ENCODE measurements at regions of chr1 and their contacts with region 1.

Region 1: GRCh38 chr1:89465201-89465600 is 59.4 kb upstream of the LRRC8B start:
- DNase-seq: no peak
- H3K4me3 Mint-ChIP-seq: no peak overlapping the region
- H3K27ac Mint-ChIP-seq: no peak overlapping the region
- H3K4me1 Mint-ChIP-seq: peaks cover 36% of the 10 kb centered on the region
- H3K27me3 Mint-ChIP-seq: peaks cover 73% of the 10 kb centered on the region

Region 2: GRCh38 chr1:89454845-89455521 is 10.2 kb before region 1 on chr1:
- CTCF ChIA-PET with region 1: interaction called, 11 read pairs
- POLR2A ChIA-PET with region 1: no interaction called
- DNase-seq: peak; percentile 80
- H3K4me3 Mint-ChIP-seq: no peak overlapping the region
- H3K27ac Mint-ChIP-seq: no peak overlapping the region
- H3K4me1 Mint-ChIP-seq: peaks cover 14% of the 10 kb centered on the region
- H3K27me3 Mint-ChIP-seq: peaks cover 37% of the 10 kb centered on the region

Region 3: DNA sequence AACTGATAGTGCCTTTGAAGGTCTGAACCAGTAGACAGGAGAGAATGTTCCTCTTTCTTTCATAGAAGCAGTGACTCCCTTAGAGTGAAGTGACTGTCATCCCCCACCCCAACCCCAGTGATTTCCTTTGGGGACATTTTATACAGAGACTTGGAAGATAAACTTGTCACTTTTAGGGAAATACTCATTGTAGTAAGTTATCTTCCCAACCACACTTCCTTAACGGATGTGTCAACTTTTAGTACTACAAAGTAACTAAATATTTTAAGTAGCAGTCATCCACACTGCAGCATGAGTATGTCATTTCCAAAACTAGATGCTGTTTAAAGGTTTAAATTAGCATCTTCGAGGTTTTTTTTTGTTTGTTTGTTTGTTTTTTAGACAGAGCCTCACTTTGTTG is 73.2 kb after region 1 on chr1:
- CTCF ChIA-PET with region 1: no interaction called
- POLR2A ChIA-PET with region 1: no interaction called
- DNase-seq: no peak
- H3K4me3 Mint-ChIP-seq: no peak overlapping the region
- H3K27ac Mint-ChIP-seq: peak overlapping the region; percentile 14
- H3K4me1 Mint-ChIP-seq: peaks cover 63% of the 10 kb centered on the region
- H3K27me3 Mint-ChIP-seq: no peaks in the 10 kb centered on the region

Region 4: GRCh38 chr1:89660224-89661061 is 195.2 kb after region 1 on chr1:
- CTCF ChIA-PET with region 1: no interaction called
- POLR2A ChIA-PET with region 1: no interaction called
- DNase-seq: no peak
- H3K4me3 Mint-ChIP-seq: no peak overlapping the region
- H3K27ac Mint-ChIP-seq: peak overlapping the region; percentile 82
- H3K4me1 Mint-ChIP-seq: peaks cover 86% of the 10 kb centered on the region
- H3K27me3 Mint-ChIP-seq: no peaks in the 10 kb centered on the region

Region 5: DNA sequence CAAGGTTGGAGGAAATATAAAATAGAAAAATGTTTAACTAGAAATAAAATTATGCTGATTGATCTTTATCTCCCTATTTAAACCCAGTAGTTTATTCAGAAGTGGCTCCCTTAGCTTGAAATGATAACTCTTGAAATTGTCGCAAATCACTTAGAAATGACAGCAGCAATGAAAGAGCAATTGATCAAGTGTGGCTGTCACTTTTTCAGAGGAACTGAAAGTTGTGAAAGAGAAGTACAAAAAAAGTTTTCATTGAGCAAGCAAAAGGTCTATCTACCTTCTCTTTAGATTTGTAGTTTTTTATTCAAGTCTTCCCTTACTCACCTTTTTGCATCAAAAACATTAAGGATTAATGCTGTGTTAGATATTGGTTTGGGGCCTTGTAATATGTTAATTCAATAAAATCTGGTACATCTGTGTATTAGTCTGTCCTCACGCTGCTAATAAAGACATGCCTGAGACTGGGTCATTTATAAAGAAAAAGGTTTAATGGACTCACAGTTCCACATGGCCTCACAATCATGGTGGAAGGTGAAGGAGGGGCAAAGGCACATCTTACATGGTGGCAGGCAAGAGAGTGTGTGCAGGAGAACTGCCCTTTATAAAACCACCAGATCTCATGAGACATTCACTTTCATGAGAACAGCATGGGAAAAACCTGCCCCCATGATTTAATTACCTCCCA is 216.0 kb after region 1 on chr1:
- CTCF ChIA-PET with region 1: no interaction called
- POLR2A ChIA-PET with region 1: no interaction called
- DNase-seq: no peak
- H3K4me3 Mint-ChIP-seq: no peak overlapping the region
- H3K27ac Mint-ChIP-seq: peak overlapping the region; percentile 58
- H3K4me1 Mint-ChIP-seq: peaks cover 42% of the 10 kb centered on the region
- H3K27me3 Mint-ChIP-seq: no peaks in the 10 kb centered on the region

Measured in activated CD4-positive, alpha-beta T cell treated with anti-CD3 and anti-CD28 coated beads, Interleukin-2, amount 10 ng/mL, durations not matched to agents 7 days and 5 days (primary cell).